Body of pancreas (tissue), 4 donors: ENCODE measurements at regions of chr1 and their contacts with region 1.

Region 1: DNA sequence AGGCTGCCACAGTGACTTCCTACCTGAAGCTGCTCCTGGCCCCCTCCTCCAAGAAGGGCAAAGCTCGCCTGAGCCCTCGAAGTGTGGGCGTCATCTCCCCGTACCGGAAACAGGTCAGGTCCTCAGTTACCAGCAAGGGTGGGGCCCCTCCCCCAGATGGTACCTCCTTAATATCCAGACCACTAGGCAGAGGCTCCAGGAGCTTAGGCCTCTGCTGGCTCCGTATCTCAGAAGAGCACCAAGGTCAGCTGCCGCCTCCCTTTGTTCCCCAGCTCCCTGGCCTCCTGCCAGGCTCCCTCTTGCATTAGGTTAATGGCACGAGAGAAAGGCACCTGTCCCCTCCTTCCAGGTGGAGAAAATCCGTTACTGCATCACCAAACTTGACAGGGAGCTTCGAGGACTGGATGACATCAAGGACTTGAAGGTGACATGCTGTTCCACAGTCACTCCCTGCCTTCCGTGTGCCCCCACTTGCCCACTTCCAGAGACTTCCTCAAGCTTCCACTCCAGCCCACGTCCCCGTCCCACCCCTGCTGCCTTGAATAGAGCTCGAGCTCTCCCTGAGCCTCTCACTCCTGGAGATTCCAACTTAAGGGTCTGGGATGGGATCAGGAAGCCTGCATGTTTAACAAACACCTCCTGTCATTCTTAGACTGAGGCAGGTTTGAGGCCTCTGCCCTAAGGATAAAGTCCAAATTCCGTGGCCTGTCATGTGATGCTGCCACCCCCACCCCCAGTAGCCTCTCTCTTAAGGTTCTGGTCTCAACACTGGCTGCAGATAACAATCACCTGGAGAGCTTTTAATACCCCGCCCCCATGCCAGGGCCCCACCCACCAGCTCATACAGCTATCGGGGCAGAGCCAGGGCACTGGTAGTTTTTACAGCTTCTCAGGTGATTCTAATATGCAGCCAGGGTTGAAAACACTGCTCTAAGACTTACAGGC is 8.3 kb downstream of the RHOC start:
- DNase-seq: peak; percentile 65 to 81 (median 73)
- ATAC-seq: peak; percentile 36
- H3K4me3 ChIP-seq: no peak overlapping the region
- H3K27ac ChIP-seq: peak overlapping the region; percentile 6 to 77 (median 75)
- H3K4me1 ChIP-seq: peaks cover 50% of the 10 kb centered on the region
- H3K27me3 ChIP-seq: no peaks in the 10 kb centered on the region
- CTCF ChIP-seq: peak in 1 of 7 experiments; percentile 3
- POLR2A ChIP-seq: no peak

Region 2: DNA sequence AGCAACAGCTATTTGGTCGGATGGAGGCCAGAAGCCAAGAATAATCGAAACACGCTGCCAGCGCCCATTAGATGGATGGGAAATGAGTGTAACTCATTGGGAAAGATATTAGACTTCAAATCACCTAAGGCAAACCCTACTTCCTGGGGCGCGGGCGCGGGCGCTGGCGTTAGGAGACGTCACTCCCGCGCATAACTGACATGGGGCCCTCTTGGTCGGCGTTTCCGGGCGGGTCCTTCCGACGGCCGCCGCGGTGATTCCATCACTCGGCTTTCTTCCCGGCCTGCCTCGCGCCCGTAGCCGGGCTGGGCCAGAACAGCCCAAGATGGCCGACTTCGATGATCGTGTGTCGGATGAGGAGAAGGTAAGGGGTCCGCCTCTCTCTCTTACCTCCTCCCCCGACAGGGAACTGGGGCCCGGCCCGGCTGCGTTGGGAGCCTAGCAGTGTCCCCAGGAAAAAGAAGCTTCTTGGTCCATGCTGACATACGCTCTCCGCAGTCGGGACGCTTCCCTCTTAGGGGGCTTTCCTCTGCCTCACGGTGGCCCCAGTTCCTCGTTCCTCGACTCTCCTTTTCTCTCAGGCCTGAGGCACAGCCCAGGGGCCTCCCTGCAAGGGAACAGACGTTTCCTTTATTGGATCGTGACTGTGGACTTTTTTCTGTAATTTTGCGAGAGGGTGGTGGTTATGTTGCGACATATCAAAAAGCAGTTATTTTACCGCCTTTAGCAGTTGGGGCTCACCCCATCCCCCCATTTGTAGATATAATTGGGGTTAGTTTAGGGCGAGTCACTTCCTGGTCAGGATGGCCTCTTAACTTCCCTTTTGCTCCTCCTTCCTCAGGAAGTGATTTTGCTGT is 78.9 kb before region 1 on chr1 and contains the start of gene CAPZA1:
- intact Hi-C with region 1: loop called (anchors 10 kb)
- DNase-seq: peak; percentile 89 to 93 (median 91)
- ATAC-seq: peak; percentile 98
- H3K4me3 ChIP-seq: peak within 1 kb of the TSS; percentile 59 to 82
- H3K27ac ChIP-seq: peak within 1 kb of the TSS; percentile 90 to 98 (median 96)
- H3K4me1 ChIP-seq: peaks cover 33% of the 10 kb centered on the region
- H3K27me3 ChIP-seq: no peaks in the 10 kb centered on the region
- CTCF ChIP-seq: no peak
- POLR2A ChIP-seq: peak; percentile 77 to 90 (median 88)
- total RNA-seq, gene CAPZA1: 56.0 to 66.9 TPM

Region 3: GRCh38 chr1:112727716-112728115 is 29.1 kb after region 1 on chr1:
- intact Hi-C with region 1: no loop called
- DNase-seq: no peak
- ATAC-seq: no peak
- H3K4me3 ChIP-seq: no peak overlapping the region
- H3K27ac ChIP-seq: no peak overlapping the region
- H3K4me1 ChIP-seq: no peaks in the 10 kb centered on the region
- H3K27me3 ChIP-seq: no peaks in the 10 kb centered on the region
- CTCF ChIP-seq: no peak
- POLR2A ChIP-seq: no peak